Sigmoid colon (tissue), 7 donors: ENCODE measurements at regions of chr3 and their contacts with region 1.

Region 1: DNA sequence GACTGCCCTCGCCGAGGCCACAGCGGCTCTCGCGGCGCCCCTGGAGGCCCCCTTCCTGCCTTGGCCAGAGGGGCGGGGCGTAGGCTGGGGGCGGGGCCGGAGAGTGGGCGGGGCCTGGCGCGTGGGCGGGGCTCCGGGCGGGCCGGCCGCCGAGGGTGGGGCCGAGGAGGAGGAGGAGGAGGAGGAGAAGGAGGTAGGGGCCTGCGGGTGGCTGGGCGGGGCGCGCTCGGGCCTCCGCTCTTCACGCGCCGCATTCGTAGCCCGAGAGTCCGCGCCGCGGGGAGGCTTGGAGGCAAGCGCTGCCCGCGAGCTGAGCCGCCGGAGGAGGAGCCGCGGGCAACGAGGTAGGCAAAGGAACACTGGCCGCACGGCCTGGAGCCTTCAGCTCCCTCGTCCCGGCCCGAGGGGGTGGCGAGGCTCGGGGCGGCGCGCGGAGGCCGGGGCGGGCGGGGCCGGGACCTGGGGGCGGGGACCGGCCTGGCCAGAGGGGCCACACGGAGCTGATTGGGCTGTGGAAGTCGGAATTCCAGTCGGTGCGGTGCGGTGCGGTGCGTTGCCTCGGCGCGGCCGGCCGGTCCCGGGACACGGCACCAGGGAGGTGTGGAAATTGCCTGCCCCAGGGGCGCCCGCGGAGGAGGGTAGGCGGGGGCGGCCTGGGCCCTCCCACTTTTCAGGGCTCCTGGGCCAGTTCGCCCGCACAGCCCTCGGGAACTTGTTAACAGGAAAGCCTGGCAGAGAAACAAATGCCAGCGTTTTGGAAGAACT is at the start of gene PPP2R3A:
- DNase-seq: peak; percentile 94
- H3K4me3 ChIP-seq: peak within 1 kb of the TSS; percentile 68 to 81 (median 76)
- H3K27ac ChIP-seq: peak within 1 kb of the TSS; percentile 94 to 97 (median 96)
- H3K4me1 ChIP-seq: peaks cover 0 to 40% (median 37%) of the 10 kb centered on the region in 4 donors
- H3K27me3 ChIP-seq: no peaks in the 10 kb centered on the region
- CTCF ChIP-seq: no peak
- EP300 ChIP-seq: peak in 1 of 4 donors; percentile 18
- POLR2A ChIP-seq: peak; percentile 5 to 38
- total RNA-seq, gene PPP2R3A: 32.9 to 49.0 (median 36.8) TPM

Region 2: GRCh38 chr3:135929670-135930069 is 36.0 kb before region 1 on chr3:
- intact Hi-C with region 1: loop called (anchors 5 kb)
- DNase-seq: peak; percentile 81
- H3K4me3 ChIP-seq: no peak overlapping the region
- H3K27ac ChIP-seq: peak overlapping the region in 3 of 4 donors; percentile 29 to 68 (median 54)
- H3K4me1 ChIP-seq: peaks cover 0 to 25% (median 15%) of the 10 kb centered on the region in 4 donors
- H3K27me3 ChIP-seq: no peaks in the 10 kb centered on the region
- CTCF ChIP-seq: peak in 2 of 4 experiments; percentile 16 to 17
- EP300 ChIP-seq: no peak
- POLR2A ChIP-seq: no peak

Region 3: DNA sequence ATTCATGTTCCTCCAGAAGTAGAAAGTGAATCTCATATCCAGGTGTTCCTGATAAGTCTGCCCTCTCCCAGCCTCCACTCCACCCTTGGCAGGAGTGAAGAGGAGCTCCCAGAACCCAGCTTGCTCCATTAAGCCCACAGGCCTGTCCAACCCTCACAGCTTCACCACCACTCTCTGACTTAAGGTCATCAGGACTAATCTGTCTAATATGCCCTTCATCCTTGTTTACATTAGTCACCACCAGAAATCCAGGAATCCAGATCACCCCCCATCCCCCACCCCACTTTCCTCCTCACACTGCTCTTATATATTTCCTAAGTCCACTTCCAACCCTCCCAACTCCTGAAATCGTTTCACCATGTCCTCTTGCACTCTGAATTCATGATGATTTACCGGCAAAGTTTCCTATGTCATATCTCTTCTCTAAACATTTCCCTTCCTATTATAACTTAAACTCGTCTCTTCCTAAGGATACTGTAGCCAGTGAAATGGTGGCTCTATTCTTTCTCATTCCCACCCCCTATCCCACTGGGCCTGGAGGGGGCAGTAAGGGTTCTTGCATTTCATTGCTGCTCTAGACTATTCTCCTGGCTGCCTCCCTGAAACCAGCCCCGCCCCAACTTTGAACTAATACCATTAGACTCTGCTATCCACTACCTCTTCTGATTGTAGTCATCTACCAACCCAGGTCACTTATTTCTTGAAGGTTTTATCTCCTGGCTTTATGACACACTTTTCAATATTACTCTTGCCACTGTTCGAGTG is 43.2 kb after region 1 on chr3:
- intact Hi-C with region 1: no loop called
- DNase-seq: no peak
- H3K4me3 ChIP-seq: no peak overlapping the region
- H3K27ac ChIP-seq: no peak overlapping the region
- H3K4me1 ChIP-seq: peaks cover 0 to 24% (median 10%) of the 10 kb centered on the region in 4 donors
- H3K27me3 ChIP-seq: no peaks in the 10 kb centered on the region
- CTCF ChIP-seq: no peak
- EP300 ChIP-seq: no peak
- POLR2A ChIP-seq: no peak

Region 4: GRCh38 chr3:136036306-136036705 is 70.6 kb after region 1 on chr3:
- intact Hi-C with region 1: loop called (anchors 5 kb)
- DNase-seq: no peak
- H3K4me3 ChIP-seq: no peak overlapping the region
- H3K27ac ChIP-seq: no peak overlapping the region
- H3K4me1 ChIP-seq: no peaks in the 10 kb centered on the region
- H3K27me3 ChIP-seq: no peaks in the 10 kb centered on the region
- CTCF ChIP-seq: no peak
- EP300 ChIP-seq: no peak
- POLR2A ChIP-seq: no peak

Region 5: DNA sequence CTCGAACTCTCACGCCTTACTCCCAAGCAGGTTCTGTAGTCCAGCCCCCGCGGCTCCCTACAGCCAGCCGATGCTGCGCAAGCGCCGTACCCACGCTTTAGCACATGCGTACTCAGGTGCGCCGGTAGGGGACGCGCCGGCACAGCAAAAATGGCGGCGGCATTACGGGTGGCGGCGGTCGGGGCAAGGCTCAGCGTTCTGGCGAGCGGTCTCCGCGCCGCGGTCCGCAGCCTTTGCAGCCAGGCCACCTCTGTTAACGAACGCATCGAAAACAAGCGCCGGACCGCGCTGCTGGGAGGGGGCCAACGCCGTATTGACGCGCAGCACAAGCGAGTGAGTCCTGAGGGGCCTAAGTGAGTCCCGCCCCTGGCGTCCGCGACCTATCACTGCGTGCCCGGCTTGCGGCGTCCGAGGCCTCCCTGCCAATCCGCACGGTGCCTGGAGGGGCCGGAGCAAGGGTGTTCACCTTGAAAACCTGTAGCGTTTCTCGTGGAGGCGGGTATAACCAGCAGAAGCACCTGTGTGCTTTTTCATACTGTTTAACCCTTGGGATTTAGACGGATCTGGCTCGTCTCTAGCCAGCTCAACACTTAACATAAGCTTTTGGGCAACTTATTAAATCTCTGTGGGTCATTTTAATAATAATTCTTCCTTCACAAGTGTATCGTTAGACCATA is 284.7 kb after region 1 on chr3 and contains the start of gene PCCB:
- intact Hi-C with region 1: loop called (anchors 5 kb)
- DNase-seq: peak; percentile 97
- H3K4me3 ChIP-seq: peak within 1 kb of the TSS; percentile 66 to 72 (median 68)
- H3K27ac ChIP-seq: peak within 1 kb of the TSS; percentile 89 to 93 (median 92)
- H3K4me1 ChIP-seq: peaks cover 0 to 18% (median 15%) of the 10 kb centered on the region in 4 donors
- H3K27me3 ChIP-seq: no peaks in the 10 kb centered on the region
- CTCF ChIP-seq: peak; percentile 80 to 97 (median 96)
- EP300 ChIP-seq: no peak
- POLR2A ChIP-seq: peak; percentile 15 to 23
- total RNA-seq, gene PCCB: 24.8 to 33.9 (median 29.0) TPM